K562 (cell line): ENCODE measurements at regions of chr5 and their contacts with region 1.

Region 1: DNA sequence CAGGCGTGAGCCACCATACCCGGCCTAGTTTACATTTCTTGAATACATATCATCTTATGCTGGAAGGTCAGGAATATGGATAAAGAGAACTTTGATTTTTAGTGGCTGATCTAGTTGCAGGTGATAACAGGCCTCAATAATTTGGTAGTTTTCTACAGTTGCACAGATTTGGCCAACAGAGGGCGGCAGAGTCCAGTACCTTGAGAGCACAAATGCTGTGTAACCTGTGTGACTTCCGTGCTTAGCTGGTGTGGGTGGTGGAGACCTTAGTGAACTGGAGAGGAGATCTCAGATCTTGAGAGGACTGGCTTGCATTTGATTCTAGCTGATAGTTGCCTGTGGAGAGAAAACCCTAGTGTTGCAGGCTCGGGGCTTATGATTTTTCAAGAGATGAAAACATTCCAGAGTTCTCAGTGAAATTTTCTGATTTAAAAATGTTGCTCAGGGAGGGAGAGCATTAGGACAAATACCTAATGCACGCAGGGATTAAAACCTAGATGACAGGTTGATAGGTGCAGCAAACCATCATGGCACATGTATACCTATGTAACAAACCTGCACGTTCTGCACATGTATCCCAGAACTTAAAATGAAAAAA is 17.4 kb upstream of the GPR151 start:
- DNase-seq: peak; percentile 55 to 81 (median 58)
- ATAC-seq: peak; percentile 98
- H3K4me3 ChIP-seq: no peak overlapping the region
- H3K27ac ChIP-seq: no peak overlapping the region
- H3K4me1 ChIP-seq: no peaks in the 10 kb centered on the region
- H3K27me3 ChIP-seq: peaks cover 0 to 11% of the 10 kb centered on the region in 2 experiments; a peak in 1 of 5 replicates
- CTCF ChIP-seq: peak; percentile 77 to 86 (median 81)
- EP300 ChIP-seq: no peak
- POLR2A ChIP-seq: no peak
- RAD21 ChIP-seq: peak; percentile 59 to 80

Region 2: DNA sequence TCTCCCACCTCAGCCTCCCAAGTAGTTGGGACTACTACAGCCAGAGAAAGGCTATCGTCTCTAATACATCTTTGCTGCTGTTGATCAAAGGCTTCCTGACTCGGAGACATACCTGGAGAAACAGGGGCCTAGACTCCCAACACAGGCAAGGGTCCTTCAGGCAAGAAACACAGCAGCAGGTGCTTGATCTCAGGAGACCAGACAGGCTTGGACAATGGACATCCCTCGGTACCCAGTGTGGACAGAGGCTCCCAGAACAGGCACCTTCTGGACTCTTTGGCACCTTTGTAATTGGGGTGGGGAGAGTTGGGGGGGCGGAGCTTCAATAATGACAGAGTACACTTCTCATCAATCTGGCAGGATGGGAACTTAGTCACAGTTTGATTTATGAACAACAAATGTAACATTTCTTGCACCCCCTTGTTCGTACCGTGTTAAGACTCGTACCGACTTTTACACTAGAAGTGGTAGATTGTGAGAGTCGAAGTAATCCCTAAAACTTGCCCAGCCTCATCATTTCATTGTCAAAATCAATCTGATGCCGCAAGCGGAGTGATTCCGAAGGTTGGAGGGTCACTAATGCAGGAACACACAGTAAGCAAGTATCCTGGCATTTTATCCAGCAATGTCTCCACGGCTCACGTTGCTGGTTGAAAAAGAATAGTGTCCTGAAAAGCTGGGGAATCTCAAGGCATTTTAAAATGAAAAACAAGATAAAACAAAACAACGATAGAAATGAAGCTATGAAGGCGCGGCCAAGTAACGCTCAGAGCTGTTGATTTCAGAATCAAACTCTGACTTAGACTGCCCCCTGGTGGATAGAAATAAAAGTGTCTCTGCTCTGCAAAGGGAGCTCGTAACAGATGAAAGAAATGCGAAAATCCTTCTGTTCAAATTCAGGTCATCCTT is 655.1 kb after region 1 on chr5:
- CTCF ChIA-PET with region 1: interaction called, 3 read pairs
- POLR2A ChIA-PET with region 1: interaction called, 3 read pairs
- in situ Hi-C with region 1: loop called (anchors 5 kb)
- intact Hi-C with region 1: loop called (anchors 1 kb)
- DNase-seq: peak; percentile 53 to 75 (median 63)
- ATAC-seq: peak; percentile 86
- H3K4me3 ChIP-seq: no peak overlapping the region
- H3K27ac ChIP-seq: no peak overlapping the region
- H3K4me1 ChIP-seq: no peaks in the 10 kb centered on the region
- H3K27me3 ChIP-seq: no peaks in the 10 kb centered on the region
- CTCF ChIP-seq: peak; percentile 47 to 70 (median 69)
- EP300 ChIP-seq: no peak
- POLR2A ChIP-seq: no peak
- RAD21 ChIP-seq: peak; percentile 55 to 76